Gastrocnemius medialis (tissue), 4 donors: ENCODE measurements at regions of chr2 and their contacts with region 1.

Region 1: GRCh38 chr2:30404319-30404953 is 42.6 kb upstream of the LCLAT1 start:
- DNase-seq: no peak
- ATAC-seq: peak in 1 of 2 donors; percentile 34
- H3K4me3 ChIP-seq: no peak overlapping the region
- H3K27ac ChIP-seq: peak overlapping the region in 2 of 4 donors; percentile 15 to 30
- H3K4me1 ChIP-seq: peaks cover 13 to 22% of the 10 kb centered on the region in 2 donors
- H3K27me3 ChIP-seq: no peaks in the 10 kb centered on the region
- CTCF ChIP-seq: no peak
- POLR2A ChIP-seq: no peak

Region 2: GRCh38 chr2:30178618-30179434 is 225.6 kb before region 1 on chr2:
- in situ Hi-C with region 1: no loop called
- intact Hi-C with region 1: loop called (anchors 5 kb)
- DNase-seq: peak; percentile 86 to 90
- ATAC-seq: peak; percentile 98 to 99
- H3K4me3 ChIP-seq: no peak overlapping the region
- H3K27ac ChIP-seq: peak overlapping the region; percentile 74 to 84 (median 80)
- H3K4me1 ChIP-seq: peaks cover 15 to 25% of the 10 kb centered on the region in 2 donors
- H3K27me3 ChIP-seq: peaks cover 0 to 6% (median 0%) of the 10 kb centered on the region in 3 donors
- CTCF ChIP-seq: no peak
- POLR2A ChIP-seq: peak; percentile 22 to 38

Region 3: GRCh38 chr2:30231212-30231995 is 173.0 kb before region 1 on chr2 and contains the start of gene LBH:
- in situ Hi-C with region 1: no loop called
- intact Hi-C with region 1: loop called (anchors 10 kb)
- DNase-seq: peak; percentile 31 to 64
- ATAC-seq: peak; percentile 69 to 70
- H3K4me3 ChIP-seq: peak within 1 kb of the TSS; percentile 58 to 82 (median 71)
- H3K27ac ChIP-seq: peak within 1 kb of the TSS; percentile 63 to 77 (median 72)
- H3K4me1 ChIP-seq: peaks cover 6 to 18% of the 10 kb centered on the region in 2 donors
- H3K27me3 ChIP-seq: peaks cover 15 to 43% (median 32%) of the 10 kb centered on the region in 3 donors
- CTCF ChIP-seq: peak in 1 of 5 experiments; percentile 10
- POLR2A ChIP-seq: peak; percentile 80 to 94
- total RNA-seq, gene LBH: 5.4 to 37.6 (median 12.5) TPM

Region 4: DNA sequence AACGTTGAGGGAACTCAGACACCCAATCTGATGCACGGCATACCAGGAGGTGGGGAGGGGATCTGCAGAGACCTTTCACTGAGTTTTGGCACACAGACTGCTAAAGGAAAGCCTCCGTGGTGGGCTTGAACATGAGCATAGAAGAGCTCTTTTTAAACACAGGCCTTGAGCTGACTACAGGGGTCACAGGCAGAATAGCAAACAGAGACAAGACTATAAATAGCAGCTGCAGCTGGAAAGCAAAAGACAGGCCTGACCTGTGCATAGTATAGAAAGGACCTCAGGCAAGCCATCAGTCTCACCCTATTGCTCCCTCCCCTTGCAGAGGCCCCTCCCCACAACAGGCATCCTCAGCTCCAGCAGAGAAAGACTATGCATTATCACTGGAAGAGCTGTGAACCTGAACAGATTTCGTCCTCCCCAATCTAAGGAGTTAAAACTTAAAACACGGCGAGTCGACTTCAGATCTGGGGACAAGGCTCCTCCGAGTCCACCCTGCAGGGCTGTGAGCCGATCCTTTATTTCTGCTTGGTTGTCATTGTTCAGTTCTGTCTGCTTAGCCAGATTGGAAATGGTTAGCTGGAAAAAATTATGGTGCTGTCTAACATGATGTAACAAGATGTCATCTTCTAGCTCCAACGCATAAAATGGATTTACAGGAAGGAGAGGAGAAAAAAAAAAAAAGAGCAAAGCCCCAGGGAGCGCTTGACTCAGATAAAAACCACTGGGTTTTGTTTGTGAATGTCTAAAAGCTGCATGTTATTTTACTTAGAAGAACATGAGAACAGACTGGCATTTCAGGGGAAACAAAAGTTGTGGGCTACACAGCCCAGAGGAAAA is 17.4 kb after region 1 on chr2:
- in situ Hi-C with region 1: no loop called
- intact Hi-C with region 1: no loop called
- DNase-seq: no peak
- ATAC-seq: peak; percentile 35 to 41
- H3K4me3 ChIP-seq: no peak overlapping the region
- H3K27ac ChIP-seq: peak overlapping the region in 2 of 4 donors; percentile 17 to 21
- H3K4me1 ChIP-seq: peaks cover 0 to 17% of the 10 kb centered on the region in 2 donors
- H3K27me3 ChIP-seq: no peaks in the 10 kb centered on the region
- CTCF ChIP-seq: no peak
- POLR2A ChIP-seq: no peak

Region 5: DNA sequence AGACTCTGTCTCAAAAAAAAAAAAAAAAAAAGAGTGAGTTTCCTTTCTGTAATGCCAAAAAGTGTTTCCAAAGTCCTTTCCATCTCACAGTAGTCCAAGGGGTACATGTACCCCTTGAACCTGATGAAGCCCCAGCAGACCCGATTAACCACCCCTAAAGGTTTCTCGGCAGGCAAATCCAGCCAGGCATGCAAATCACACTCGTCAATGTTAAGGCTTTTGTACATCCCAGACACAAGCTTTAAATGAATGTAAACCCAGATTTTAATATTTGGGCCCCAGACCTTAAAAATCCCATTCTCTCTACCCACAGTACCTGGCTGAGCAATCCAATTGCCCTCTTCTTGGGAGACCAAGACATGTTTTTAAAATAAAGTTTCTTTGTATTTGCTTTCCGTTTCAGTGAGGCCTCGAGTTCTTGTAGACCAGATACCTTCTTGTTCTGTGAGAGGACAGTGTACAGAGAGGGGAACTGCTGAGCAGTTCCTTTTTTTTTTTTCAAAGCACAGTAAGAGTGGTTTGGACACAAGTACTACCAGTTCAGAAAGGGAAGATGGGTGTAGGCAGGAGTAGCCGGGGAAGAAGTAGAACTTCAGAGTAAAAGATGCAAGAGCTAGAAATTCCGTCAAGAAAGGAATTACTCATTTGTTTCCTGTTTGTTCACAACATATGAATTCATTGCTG is 1860.1 kb after region 1 on chr2 and contains the start of gene NLRC4:
- in situ Hi-C with region 1: no loop called
- intact Hi-C with region 1: no loop called
- DNase-seq: no peak
- ATAC-seq: no peak
- H3K4me3 ChIP-seq: no peak within 1 kb of the TSS
- H3K27ac ChIP-seq: no peak within 1 kb of the TSS
- H3K4me1 ChIP-seq: no peaks in the 10 kb centered on the region
- H3K27me3 ChIP-seq: no peaks in the 10 kb centered on the region
- CTCF ChIP-seq: no peak
- POLR2A ChIP-seq: no peak
- total RNA-seq, gene NLRC4: 0.10 to 0.60 (median 0.23) TPM